ENCODE measurements at regions of chr7 and their contacts with region 1.

Region 1: GRCh38 chr7:26376175-26376917 is 84.7 kb downstream of the SNX10 start:
- DNase-seq: peak; percentile 34 to 54
- ATAC-seq: peak; percentile 54 to 60 (median 58)
- H3K4me3 ChIP-seq: peak overlapping the region; percentile 58
- H3K4me3 Mint-ChIP-seq: peak overlapping the region; percentile 90
- H3K27ac ChIP-seq: no peak overlapping the region
- H3K27ac Mint-ChIP-seq: peak overlapping the region in 1 of 2 donors; percentile 76
- H3K4me1 ChIP-seq: peaks cover 10% of the 10 kb centered on the region
- H3K4me1 Mint-ChIP-seq: peaks cover 6 to 14% of the 10 kb centered on the region in 2 donors
- H3K27me3 ChIP-seq: no peaks in the 10 kb centered on the region
- H3K27me3 Mint-ChIP-seq: no peaks in the 10 kb centered on the region
- CTCF ChIP-seq: no peak

Region 2: GRCh38 chr7:26667500-26668133 is 291.3 kb after region 1 on chr7:
- intact Hi-C with region 1: loop called (anchors 5 kb)
- DNase-seq: peak in 1 of 2 donors; percentile 82
- ATAC-seq: peak; percentile 50 to 65 (median 59)
- H3K4me3 ChIP-seq: no peak overlapping the region
- H3K4me3 Mint-ChIP-seq: no peak overlapping the region
- H3K27ac ChIP-seq: no peak overlapping the region
- H3K27ac Mint-ChIP-seq: no peak overlapping the region
- H3K4me1 ChIP-seq: no peaks in the 10 kb centered on the region
- H3K4me1 Mint-ChIP-seq: peaks cover 16 to 18% of the 10 kb centered on the region in 2 donors
- H3K27me3 ChIP-seq: no peaks in the 10 kb centered on the region
- H3K27me3 Mint-ChIP-seq: no peaks in the 10 kb centered on the region
- CTCF ChIP-seq: peak; percentile 46

Measured in natural killer cell (primary cell).